ENCODE measurements at regions of chr11 and their contacts with region 1.

Region 1: GRCh38 chr11:57761301-57762234 is at the start of gene CTNND1:
- H3K4me3 Mint-ChIP-seq: peak within 1 kb of the TSS; percentile 93
- H3K27ac Mint-ChIP-seq: peak within 1 kb of the TSS; percentile 96
- H3K4me1 Mint-ChIP-seq: peaks cover 35% of the 10 kb centered on the region
- H3K27me3 Mint-ChIP-seq: no peaks in the 10 kb centered on the region

Region 2: DNA sequence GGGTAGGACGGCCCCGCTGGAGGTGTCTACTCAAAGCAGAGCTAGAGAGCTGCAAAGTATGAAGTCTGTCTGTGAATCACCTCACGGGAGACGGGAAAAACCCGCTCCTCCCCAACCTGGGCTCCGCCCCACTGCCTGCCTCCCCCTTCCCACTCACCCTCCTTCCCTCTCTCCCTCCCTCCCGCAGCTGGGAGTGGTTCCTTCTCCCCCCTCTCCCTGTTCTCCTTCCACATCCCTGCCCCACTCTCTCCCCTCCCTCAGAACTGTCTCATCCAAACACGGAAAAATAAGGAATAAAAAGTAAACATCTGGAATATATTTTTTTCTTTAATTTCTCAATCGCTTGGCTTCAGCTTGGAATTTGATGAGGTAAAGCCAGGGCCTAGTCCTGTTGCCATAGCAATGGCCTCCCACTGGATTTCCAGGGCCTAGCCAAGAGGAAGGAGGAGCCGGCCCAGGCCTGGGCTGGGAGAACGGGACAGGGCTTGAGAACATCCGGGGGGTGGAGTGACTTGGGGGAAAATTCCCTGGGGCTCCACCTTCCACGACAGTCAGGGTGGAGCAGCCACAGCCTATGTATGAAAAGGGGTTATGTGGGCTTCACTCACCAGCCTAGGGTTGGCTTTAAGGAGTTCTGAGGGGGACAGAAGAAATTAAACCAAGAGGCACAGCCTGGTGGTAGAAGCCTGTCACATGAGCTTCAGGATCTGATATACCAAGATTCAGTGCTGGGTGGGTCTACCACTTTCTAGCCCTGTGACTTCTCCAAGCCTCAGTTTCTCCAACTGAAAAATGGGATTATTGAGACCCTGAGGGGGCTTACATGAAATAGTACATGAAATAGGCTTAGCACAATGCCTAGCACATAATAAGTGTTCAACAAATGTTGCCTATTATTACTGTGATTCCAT is 439.1 kb before region 1 on chr11:
- intact Hi-C with region 1: no loop called
- H3K4me3 Mint-ChIP-seq: no peak overlapping the region
- H3K27ac Mint-ChIP-seq: peak overlapping the region; percentile 90
- H3K4me1 Mint-ChIP-seq: peaks cover 60% of the 10 kb centered on the region
- H3K27me3 Mint-ChIP-seq: peaks cover 7% of the 10 kb centered on the region

Region 3: DNA sequence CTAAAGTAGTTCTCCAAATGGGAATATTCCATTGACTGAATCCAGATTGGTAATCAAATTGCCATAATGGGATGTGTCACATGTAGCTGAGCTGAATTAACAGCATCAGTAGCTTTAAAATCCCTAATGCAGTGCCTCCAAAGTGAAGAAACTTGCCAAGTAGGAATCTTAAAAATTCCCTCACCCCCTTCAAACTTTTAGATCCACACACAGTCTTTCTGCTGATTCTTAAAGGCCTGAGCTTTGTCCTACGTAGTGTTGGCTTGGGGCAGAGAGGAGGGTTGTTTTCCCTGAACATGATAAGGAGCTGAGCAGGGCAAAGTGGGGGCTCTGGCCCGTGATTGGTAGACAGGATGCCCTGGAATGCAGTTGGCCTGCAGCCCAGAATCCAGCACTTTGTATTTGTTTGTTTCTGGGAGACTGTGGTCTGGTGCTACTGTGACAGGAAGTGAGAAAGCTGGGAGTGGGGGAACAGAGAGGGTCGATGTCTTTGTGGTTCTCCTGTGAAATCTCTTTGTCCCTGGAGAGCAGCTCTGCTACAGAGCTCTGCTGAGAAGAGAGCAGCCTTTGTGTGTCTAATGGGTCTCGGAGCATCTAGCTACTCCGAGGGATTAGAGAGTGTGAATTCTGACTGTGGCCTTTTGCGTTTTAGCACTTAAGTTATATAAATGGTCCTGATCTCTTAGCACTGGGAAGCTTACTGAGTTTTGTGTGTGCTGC is 16.9 kb after region 1 on chr11:
- intact Hi-C with region 1: no loop called
- H3K4me3 Mint-ChIP-seq: no peak overlapping the region
- H3K27ac Mint-ChIP-seq: peak overlapping the region; percentile 51
- H3K4me1 Mint-ChIP-seq: peaks cover 93% of the 10 kb centered on the region
- H3K27me3 Mint-ChIP-seq: no peaks in the 10 kb centered on the region

Region 4: DNA sequence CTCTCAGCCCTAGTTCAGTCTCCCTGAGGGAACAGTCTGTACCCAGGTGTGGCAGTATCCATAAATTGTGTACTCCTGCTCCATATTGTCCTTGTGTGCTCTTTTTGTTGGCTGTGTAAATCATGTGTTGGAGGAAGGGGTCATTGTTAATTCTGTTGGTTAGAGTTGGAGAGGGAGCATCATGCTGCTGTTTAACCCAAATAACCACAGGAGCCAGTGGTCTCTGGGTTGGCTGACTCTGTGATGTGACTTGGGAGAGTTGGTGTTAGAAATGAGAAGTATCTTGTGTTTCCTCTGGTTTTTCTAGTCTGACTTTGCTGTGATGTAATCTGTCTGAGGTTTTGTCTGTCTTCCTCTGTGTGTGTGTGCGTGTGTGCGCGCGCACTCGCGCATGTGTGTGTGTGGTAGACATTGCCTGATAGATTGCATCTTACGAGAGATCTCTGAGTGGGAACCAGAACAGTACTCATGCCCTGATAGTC is 30.5 kb after region 1 on chr11:
- intact Hi-C with region 1: loop called (anchors 2 kb)
- H3K4me3 Mint-ChIP-seq: peak overlapping the region; percentile 52
- H3K27ac Mint-ChIP-seq: peak overlapping the region; percentile 95
- H3K4me1 Mint-ChIP-seq: peaks cover 79% of the 10 kb centered on the region
- H3K27me3 Mint-ChIP-seq: no peaks in the 10 kb centered on the region

Region 5: GRCh38 chr11:57800444-57801182 is 39.0 kb after region 1 on chr11:
- intact Hi-C with region 1: loop called (anchors 1 kb)
- H3K4me3 Mint-ChIP-seq: no peak overlapping the region
- H3K27ac Mint-ChIP-seq: peak overlapping the region; percentile 60
- H3K4me1 Mint-ChIP-seq: peaks cover 41% of the 10 kb centered on the region
- H3K27me3 Mint-ChIP-seq: no peaks in the 10 kb centered on the region